Naive thymus-derived CD4-positive, alpha-beta T cell (primary cell): ENCODE measurements at regions of chr1 and their contacts with region 1.

Region 1: DNA sequence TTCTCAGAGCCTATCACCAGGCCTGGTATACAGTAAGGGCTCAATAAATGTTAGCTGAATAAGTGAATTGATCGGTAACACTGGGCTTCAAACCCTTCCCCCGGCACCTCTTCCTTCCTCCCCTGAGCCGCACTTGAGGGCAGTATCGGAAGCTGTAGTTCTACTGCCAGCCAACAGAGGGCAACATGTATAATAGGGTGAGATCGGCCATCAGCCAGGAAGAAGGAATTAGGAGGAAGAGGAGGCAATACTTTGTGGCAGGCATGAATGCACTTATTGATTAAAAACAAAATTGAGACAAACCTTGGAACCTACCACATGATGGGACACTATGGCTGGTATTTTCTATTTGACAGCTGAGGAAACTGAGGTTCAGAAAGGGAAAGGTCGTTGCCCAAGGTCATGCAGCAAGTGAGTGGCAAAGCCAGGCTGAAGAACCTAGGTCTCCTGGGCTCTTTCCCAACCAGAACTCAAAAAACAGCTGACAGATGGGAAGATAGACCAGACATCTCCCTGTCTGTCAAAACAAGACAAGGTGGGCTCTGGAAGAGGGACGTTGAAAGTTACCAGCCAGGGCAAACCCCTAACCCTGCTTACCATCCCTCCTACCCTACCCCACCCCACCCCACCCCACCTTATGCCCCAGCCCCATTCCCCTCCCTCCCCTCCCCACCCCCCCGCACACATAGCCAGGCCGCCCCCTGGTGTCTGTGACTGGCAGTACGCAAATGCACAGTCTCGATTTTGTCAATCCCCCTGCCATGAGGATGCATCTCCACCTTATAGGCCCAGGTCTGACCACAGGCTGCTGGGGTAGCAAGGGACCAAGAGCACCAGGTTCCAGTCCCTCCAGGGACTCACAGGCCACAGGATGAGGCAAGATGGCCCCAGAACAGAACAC is 107.3 kb upstream of the RUNX3 start:
- DNase-seq: peak; percentile 39 to 70 (median 56)
- ATAC-seq: peak; percentile 58
- H3K4me3 ChIP-seq: no peak overlapping the region
- H3K4me3 Mint-ChIP-seq: peak overlapping the region in 9 of 10 donors; percentile 1 to 44 (median 17)
- H3K27ac ChIP-seq: no peak overlapping the region
- H3K27ac Mint-ChIP-seq: peak overlapping the region in 8 of 9 donors; percentile 34 to 74 (median 54)
- H3K4me1 ChIP-seq: peaks cover 43 to 57% of the 10 kb centered on the region in 2 donors
- H3K4me1 Mint-ChIP-seq: peaks cover 28 to 42% (median 33%) of the 10 kb centered on the region in 7 donors
- H3K27me3 ChIP-seq: no peaks in the 10 kb centered on the region
- H3K27me3 Mint-ChIP-seq: peaks cover 0 to 12% (median 0%) of the 10 kb centered on the region in 5 donors

Region 2: DNA sequence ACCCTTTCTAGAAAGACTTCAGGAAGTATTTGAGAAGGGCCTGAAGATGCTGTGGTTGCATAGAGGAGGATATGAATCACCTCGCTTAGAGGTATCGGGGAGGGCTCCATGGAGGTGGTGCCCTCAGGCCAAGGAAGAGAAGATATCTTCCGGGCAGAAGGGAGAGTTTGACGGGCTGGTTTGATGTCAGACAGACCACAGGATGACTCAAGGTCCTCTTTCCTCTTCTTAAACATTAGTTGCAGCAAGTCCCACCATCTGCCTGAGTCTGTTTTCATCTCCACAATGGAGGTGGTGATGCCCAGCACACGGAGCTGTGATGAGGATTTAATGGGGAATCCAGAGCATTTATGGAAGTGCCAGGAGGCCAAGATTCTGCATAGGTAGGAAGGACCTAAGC is 82.3 kb before region 1 on chr1:
- CTCF ChIA-PET with region 1: interaction called, 17 read pairs
- POLR2A ChIA-PET with region 1: interaction called, 4 read pairs
- intact Hi-C with region 1: no loop called
- DNase-seq: peak in 1 of 9 donors; percentile 75
- ATAC-seq: peak; percentile 88
- H3K4me3 ChIP-seq: no peak overlapping the region
- H3K4me3 Mint-ChIP-seq: peak overlapping the region; percentile 32 to 87 (median 66)
- H3K27ac ChIP-seq: no peak overlapping the region
- H3K27ac Mint-ChIP-seq: peak overlapping the region; percentile 56 to 92 (median 83)
- H3K4me1 ChIP-seq: peaks cover 56 to 57% of the 10 kb centered on the region in 2 donors
- H3K4me1 Mint-ChIP-seq: peaks cover 45 to 90% (median 80%) of the 10 kb centered on the region in 7 donors
- H3K27me3 ChIP-seq: no peaks in the 10 kb centered on the region
- H3K27me3 Mint-ChIP-seq: no peaks in the 10 kb centered on the region

Region 3: GRCh38 chr1:24987875-24988557 is 49.4 kb before region 1 on chr1:
- CTCF ChIA-PET with region 1: interaction called, 24 read pairs
- POLR2A ChIA-PET with region 1: interaction called, 8 read pairs
- intact Hi-C with region 1: loop called in 1 of 2 experiments (anchors 1 kb)
- DNase-seq: no peak
- ATAC-seq: peak; percentile 78
- H3K4me3 ChIP-seq: no peak overlapping the region
- H3K4me3 Mint-ChIP-seq: peak overlapping the region in 8 of 10 donors; percentile 6 to 80 (median 58)
- H3K27ac ChIP-seq: no peak overlapping the region
- H3K27ac Mint-ChIP-seq: peak overlapping the region; percentile 49 to 100 (median 81)
- H3K4me1 ChIP-seq: peaks cover 66 to 96% of the 10 kb centered on the region in 2 donors
- H3K4me1 Mint-ChIP-seq: peaks cover 78 to 99% (median 92%) of the 10 kb centered on the region in 7 donors
- H3K27me3 ChIP-seq: no peaks in the 10 kb centered on the region
- H3K27me3 Mint-ChIP-seq: peaks cover 0 to 10% (median 0%) of the 10 kb centered on the region in 5 donors

Region 4: GRCh38 chr1:24996983-24997893 is 40.2 kb before region 1 on chr1:
- CTCF ChIA-PET with region 1: interaction called, 24 read pairs
- POLR2A ChIA-PET with region 1: interaction called, 8 read pairs
- intact Hi-C with region 1: no loop called
- DNase-seq: no peak
- ATAC-seq: peak; percentile 52
- H3K4me3 ChIP-seq: peak overlapping the region; percentile 0
- H3K4me3 Mint-ChIP-seq: peak overlapping the region; percentile 10 to 95 (median 55)
- H3K27ac ChIP-seq: peak overlapping the region; percentile 29
- H3K27ac Mint-ChIP-seq: peak overlapping the region; percentile 67 to 100 (median 86)
- H3K4me1 ChIP-seq: peaks cover 56 to 69% of the 10 kb centered on the region in 2 donors
- H3K4me1 Mint-ChIP-seq: peaks cover 44 to 84% (median 76%) of the 10 kb centered on the region in 7 donors
- H3K27me3 ChIP-seq: no peaks in the 10 kb centered on the region
- H3K27me3 Mint-ChIP-seq: no peaks in the 10 kb centered on the region

Region 5: GRCh38 chr1:25099343-25099951 is 62.0 kb after region 1 on chr1:
- CTCF ChIA-PET with region 1: interaction called, 19 read pairs
- POLR2A ChIA-PET with region 1: interaction called, 3 read pairs
- intact Hi-C with region 1: loop called (anchors 1 kb)
- DNase-seq: peak in 1 of 9 donors; percentile 46
- ATAC-seq: peak; percentile 49
- H3K4me3 ChIP-seq: no peak overlapping the region
- H3K4me3 Mint-ChIP-seq: peak overlapping the region in 8 of 10 donors; percentile 2 to 77 (median 55)
- H3K27ac ChIP-seq: no peak overlapping the region
- H3K27ac Mint-ChIP-seq: peak overlapping the region in 7 of 9 donors; percentile 6 to 84 (median 61)
- H3K4me1 ChIP-seq: peaks cover 44 to 73% of the 10 kb centered on the region in 2 donors
- H3K4me1 Mint-ChIP-seq: peaks cover 33 to 74% (median 59%) of the 10 kb centered on the region in 7 donors
- H3K27me3 ChIP-seq: no peaks in the 10 kb centered on the region
- H3K27me3 Mint-ChIP-seq: peaks cover 0 to 4% (median 0%) of the 10 kb centered on the region in 5 donors